Activated naive CD4-positive, alpha-beta T cell treated with anti-CD3 and anti-CD28 coated beads for 36 hours (primary cell): ENCODE measurements at regions of chr12 and their contacts with region 1.

Region 1: GRCh38 chr12:53251477-53252348 is 16.4 kb upstream of the ESPL1 start:
- DNase-seq: peak; percentile 85
- H3K4me3 Mint-ChIP-seq: peak overlapping the region; percentile 97
- H3K27ac Mint-ChIP-seq: peak overlapping the region; percentile 87
- H3K4me1 Mint-ChIP-seq: peaks cover 40% of the 10 kb centered on the region
- H3K27me3 Mint-ChIP-seq: no peaks in the 10 kb centered on the region

Region 2: DNA sequence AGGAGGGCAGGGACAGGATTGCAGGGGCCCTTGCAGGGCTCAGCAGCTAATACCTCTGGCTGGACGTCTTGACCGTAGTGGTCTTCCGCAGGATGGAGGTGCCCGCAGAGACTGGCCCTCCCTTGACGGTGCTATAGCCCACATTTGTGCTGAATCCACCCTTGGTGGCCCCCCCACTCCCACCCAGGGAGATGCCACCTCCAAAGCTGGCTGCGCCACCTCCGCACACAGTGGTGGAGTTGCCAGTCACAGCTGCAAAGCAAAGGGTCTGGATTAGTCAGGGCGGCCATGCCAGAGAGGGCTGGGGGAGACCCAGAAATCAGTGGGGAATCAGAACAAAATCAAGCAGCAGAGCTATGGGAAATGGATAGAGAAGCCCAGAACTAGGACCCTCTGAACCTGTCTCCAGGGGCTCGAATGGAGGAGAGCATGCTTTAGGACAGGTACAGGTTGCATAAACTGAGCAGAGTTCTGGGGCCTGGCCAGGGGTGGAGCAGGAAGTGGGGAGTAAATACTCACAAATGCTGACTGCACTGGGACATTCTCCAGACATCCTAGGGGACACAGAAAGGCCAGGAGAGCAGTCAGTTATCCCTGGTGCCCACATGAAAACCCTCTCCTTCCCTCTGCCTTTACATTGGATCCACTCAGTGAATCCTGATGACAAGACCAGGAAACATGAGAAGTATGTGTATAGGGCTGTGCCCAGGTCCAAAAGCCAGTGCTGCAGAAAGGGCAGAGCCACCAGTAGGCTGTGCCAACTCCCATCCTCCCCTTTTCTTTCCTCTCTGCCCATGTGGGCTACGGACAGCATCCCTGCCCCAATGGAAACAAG is 429.7 kb before region 1 on chr12:
- CTCF ChIA-PET with region 1: no interaction called
- intact Hi-C with region 1: no loop called
- DNase-seq: no peak
- H3K4me3 Mint-ChIP-seq: no peak overlapping the region
- H3K27ac Mint-ChIP-seq: no peak overlapping the region
- H3K4me1 Mint-ChIP-seq: peaks cover 10% of the 10 kb centered on the region
- H3K27me3 Mint-ChIP-seq: no peaks in the 10 kb centered on the region

Region 3: GRCh38 chr12:53231826-53232645 is 19.7 kb before region 1 on chr12 and contains the start of gene RARG:
- CTCF ChIA-PET with region 1: interaction called, 16 read pairs
- intact Hi-C with region 1: no loop called
- DNase-seq: peak; percentile 70
- H3K4me3 Mint-ChIP-seq: peak within 1 kb of the TSS; percentile 82
- H3K27ac Mint-ChIP-seq: peak within 1 kb of the TSS; percentile 27
- H3K4me1 Mint-ChIP-seq: peaks cover 59% of the 10 kb centered on the region
- H3K27me3 Mint-ChIP-seq: no peaks in the 10 kb centered on the region
- total RNA-seq, gene RARG: 4.0 to 4.6 TPM

Region 4: GRCh38 chr12:53287741-53288216 is 36.1 kb after region 1 on chr12:
- CTCF ChIA-PET with region 1: interaction called, 9 read pairs
- intact Hi-C with region 1: loop called (anchors 1 kb)
- DNase-seq: peak; percentile 77
- H3K4me3 Mint-ChIP-seq: no peak overlapping the region
- H3K27ac Mint-ChIP-seq: peak overlapping the region; percentile 32
- H3K4me1 Mint-ChIP-seq: peaks cover 23% of the 10 kb centered on the region
- H3K27me3 Mint-ChIP-seq: no peaks in the 10 kb centered on the region

Region 5: GRCh38 chr12:53344824-53345485 is 93.2 kb after region 1 on chr12:
- CTCF ChIA-PET with region 1: no interaction called
- intact Hi-C with region 1: loop called (anchors 1 kb)
- DNase-seq: peak; percentile 86
- H3K4me3 Mint-ChIP-seq: peak overlapping the region; percentile 91
- H3K27ac Mint-ChIP-seq: no peak overlapping the region
- H3K4me1 Mint-ChIP-seq: peaks cover 9% of the 10 kb centered on the region
- H3K27me3 Mint-ChIP-seq: no peaks in the 10 kb centered on the region